Heart right ventricle (tissue), 16 donors: ENCODE measurements at regions of chr19 and their contacts with region 1.

Region 1: DNA sequence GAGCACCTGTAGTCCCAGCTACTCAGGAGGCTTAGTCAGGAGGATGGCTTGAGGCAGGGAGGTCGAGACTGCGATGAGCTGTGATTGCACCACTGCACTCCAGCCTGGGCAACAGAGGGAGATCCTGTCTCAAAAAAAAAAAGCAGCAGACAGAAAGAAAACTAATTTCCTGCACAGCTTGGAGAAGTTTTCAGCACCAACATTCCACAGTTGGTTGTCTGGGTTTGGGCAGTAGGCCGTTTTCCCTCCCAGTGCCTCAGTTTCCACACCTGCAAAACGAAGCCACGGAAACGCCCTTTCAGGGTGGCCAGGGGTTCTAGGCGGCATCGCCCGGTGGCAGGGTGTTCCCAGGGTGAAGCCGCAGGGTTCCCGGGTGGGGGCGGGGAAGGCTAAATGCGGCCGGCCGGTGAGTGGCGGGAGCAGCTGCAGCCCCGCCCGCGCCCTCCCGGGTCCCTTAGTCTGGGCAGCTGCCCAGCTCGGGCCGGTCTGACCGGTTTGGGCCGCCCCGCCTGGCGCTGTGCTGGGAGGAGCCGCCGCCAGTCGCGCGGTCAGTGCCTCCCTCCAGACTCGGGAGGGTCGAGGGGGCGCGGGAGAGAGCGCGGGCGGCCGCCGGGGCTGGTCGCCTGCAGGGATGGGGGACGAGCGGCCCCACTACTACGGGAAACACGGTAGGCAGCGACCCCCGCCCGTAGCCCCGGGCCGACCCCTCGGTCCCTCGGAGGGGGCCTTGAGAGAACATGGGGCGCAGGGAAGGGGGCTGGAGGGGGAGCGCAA is at the start of gene SLC44A2:
- DNase-seq: peak; percentile 84
- ATAC-seq: peak; percentile 96 to 98 (median 98)
- H3K4me3 ChIP-seq: peak within 1 kb of the TSS; percentile 4 to 70 (median 62)
- H3K27ac ChIP-seq: peak within 1 kb of the TSS; percentile 67 to 91 (median 81)
- H3K4me1 ChIP-seq: peaks cover 5 to 44% (median 18%) of the 10 kb centered on the region in 9 donors
- H3K27me3 ChIP-seq: no peaks in the 10 kb centered on the region
- CTCF ChIP-seq: no peak
- total RNA-seq, gene SLC44A2: 82.5 to 114 (median 96.7) TPM

Region 2: DNA sequence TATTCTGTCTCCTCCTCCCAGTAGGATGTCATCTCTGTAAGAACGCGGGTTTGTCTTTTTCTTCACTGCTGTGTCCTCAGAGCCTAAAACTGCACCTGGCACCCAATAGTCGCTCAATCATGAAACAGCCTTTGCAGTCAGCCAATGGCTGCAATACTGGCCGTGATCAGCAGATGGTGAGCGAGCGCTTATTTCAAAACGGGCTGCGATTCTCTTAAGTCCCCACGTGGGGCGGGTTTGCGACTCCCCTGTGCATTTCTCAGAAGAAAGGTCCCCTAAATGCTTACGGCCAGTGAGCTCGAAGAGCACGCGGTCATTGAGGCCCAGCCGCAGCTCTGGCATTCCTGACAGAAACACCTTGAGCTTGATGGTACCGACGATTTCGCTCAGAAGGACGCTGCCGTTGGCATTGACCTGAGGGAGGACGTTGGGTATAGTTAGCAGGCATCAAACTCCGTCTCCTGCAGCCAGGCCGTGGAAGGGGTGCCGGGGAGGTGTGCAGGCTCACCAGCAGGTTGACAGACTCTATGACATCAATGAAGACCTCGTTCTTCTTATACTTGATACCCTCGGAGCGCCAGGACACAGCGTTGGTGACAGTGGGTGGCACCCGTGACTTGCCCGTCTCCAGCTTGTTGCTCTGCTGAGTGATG is 44.1 kb before region 1 on chr19:
- intact Hi-C with region 1: no loop called
- DNase-seq: peak; percentile 84 to 88
- ATAC-seq: peak; percentile 74 to 93 (median 86)
- H3K4me3 ChIP-seq: peak overlapping the region in 4 of 10 donors; percentile 11 to 26 (median 18)
- H3K27ac ChIP-seq: no peak overlapping the region
- H3K4me1 ChIP-seq: peaks cover 0 to 13% (median 0%) of the 10 kb centered on the region in 9 donors
- H3K27me3 ChIP-seq: peaks cover 0 to 5% (median 0%) of the 10 kb centered on the region in 7 donors
- CTCF ChIP-seq: peak; percentile 97 to 100 (median 98)

Region 3: DNA sequence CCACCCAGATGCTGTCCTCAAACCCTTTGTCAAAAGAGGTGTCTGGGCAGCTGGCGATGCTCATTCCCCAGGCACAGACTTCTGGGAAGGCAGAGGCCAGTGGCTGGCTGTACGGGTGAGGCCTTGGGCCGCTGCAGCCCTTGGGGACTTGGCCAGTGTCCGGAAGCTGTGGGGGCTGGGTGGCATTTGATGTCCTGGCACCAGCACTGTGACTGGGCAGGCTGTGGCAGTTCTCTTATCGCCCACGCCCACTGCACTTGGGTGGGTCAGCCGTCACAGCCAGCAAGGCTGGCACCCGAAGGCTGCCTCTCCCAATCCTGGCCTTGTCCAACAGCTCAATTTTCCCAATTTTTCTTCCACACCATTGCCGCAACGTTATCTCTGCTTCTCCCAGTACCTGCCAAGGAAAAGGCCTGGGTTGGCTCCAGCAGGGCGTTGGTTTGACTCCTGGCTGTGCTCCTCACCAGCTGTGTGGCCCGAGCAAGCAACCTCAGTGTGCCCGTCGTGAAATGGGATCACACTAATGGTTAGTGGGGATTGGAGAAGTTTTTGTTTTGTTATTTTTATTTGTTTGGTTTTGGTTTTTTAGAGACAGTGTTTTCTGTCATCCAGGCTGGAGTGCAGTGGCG is 12.6 kb before region 1 on chr19:
- intact Hi-C with region 1: loop called in 1 of 10 experiments (anchors 1 kb)
- DNase-seq: peak; percentile 84 to 86
- ATAC-seq: peak; percentile 90 to 99 (median 98)
- H3K4me3 ChIP-seq: peak overlapping the region in 1 of 10 donors; percentile 21
- H3K27ac ChIP-seq: peak overlapping the region; percentile 58 to 84 (median 74)
- H3K4me1 ChIP-seq: peaks cover 15 to 60% (median 49%) of the 10 kb centered on the region in 9 donors
- H3K27me3 ChIP-seq: no peaks in the 10 kb centered on the region
- CTCF ChIP-seq: no peak